Activated B cell treated with CpG ODN at 0.5 μM for 24 hours (primary cell): ENCODE measurements at regions of chr1 and their contacts with region 1.

Region 1: GRCh38 chr1:220217383-220217988 is 54.8 kb downstream of the RAB3GAP2 start:
- DNase-seq: no peak
- ATAC-seq: no peak
- H3K4me3 Mint-ChIP-seq: no peak overlapping the region
- H3K27ac Mint-ChIP-seq: peak overlapping the region; percentile 0
- H3K4me1 Mint-ChIP-seq: peaks cover 49% of the 10 kb centered on the region
- H3K27me3 Mint-ChIP-seq: no peaks in the 10 kb centered on the region
- CTCF ChIP-seq: no peak

Region 2: DNA sequence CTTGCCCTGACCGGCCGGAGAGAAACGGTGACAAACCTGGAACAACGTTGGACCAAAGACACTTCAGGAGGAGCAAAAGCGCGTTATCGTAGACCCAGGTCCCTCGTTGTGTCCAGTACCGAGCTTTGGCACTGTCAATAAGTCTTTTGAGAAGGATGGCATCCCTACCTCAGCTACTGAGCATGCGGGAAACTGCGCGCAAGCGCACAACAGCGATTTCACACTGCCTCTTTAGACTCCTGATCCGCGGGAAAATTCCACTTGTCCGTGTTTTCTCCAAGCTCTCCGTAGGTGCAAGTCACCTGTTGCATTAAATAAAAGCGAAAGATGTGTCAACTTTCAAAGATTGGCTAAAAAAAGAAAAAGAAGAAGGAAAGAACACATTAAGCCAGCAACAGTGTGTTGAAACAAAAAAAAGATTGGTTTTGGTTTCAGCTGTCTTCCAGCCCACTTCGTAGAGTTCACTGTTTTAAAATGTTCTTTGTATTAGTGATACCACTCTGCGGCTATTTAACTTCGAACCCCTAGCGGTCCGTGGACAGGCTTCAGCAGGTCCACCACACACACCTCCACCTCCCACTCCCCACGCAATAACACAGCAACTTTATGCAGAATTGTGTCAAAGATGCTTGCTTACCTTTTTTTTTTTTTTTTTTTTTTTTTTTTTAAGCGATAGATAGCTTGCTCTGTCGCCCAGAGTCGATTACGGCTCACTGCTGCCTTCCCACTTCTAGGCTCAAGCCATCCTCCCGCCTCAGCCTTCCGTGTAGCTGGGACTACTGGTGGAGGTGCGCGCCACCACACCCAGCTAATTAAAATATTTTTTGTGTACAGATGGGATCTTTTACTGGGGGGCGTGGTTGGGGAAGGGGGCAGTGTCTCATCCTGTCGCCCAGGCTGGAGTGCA is 127.6 kb before region 1 on chr1 and contains the start of gene BPNT1:
- CTCF ChIA-PET with region 1: no interaction called
- POLR2A ChIA-PET with region 1: no interaction called
- intact Hi-C with region 1: loop called (anchors 2 kb)
- DNase-seq: peak; percentile 88
- ATAC-seq: peak; percentile 69
- H3K4me3 Mint-ChIP-seq: peak within 1 kb of the TSS; percentile 95
- H3K27ac Mint-ChIP-seq: peak within 1 kb of the TSS; percentile 96
- H3K4me1 Mint-ChIP-seq: peaks cover 34% of the 10 kb centered on the region
- H3K27me3 Mint-ChIP-seq: no peaks in the 10 kb centered on the region
- CTCF ChIP-seq: no peak
- total RNA-seq, gene BPNT1: 22.8 and 23.6 TPM in 2 replicates

Region 3: DNA sequence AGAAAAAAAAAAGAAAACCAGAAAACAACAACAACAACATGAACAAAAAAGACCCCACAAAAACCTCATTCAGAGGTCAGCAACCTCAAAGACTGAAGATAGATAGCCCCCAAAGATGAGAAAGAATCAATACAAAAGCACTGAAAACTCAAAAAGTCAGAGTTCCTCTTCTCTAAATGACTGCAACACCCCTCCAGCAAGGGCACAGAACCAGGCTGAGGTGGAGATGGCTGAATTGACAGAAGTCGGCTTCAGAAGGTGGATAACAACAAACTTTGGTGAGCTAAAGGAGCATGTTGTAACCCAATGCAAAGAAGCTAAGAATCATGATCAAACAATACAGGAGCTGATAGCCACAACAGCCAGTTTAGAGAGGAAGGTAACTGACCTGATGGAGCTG is 37.7 kb after region 1 on chr1:
- CTCF ChIA-PET with region 1: interaction called, 3 read pairs
- POLR2A ChIA-PET with region 1: interaction called, 4 read pairs
- intact Hi-C with region 1: loop called (anchors 2 kb)
- DNase-seq: no peak
- ATAC-seq: peak; percentile 47
- H3K4me3 Mint-ChIP-seq: peak overlapping the region; percentile 51
- H3K27ac Mint-ChIP-seq: peak overlapping the region; percentile 80
- H3K4me1 Mint-ChIP-seq: peaks cover 77% of the 10 kb centered on the region
- H3K27me3 Mint-ChIP-seq: no peaks in the 10 kb centered on the region
- CTCF ChIP-seq: no peak

Region 4: DNA sequence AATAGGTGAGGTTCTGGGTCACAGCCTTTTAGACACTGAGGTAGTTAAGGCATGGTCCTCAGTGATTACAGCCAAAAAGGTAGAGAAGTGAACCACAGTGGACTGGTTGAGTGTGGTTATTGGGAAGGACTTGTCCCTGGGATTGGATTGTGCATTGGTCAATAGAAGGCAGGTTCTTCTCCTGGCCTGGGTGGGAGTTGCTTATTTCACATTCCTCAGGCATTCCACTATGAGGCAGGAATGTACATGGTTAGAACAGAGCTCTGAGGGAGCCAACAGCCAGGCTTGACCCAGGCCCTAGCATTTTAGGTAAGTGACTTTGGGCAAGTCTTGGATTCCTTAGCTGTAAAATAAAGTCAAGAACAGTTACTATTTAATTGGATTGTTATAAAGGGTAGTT is 212.6 kb after region 1 on chr1:
- CTCF ChIA-PET with region 1: no interaction called
- POLR2A ChIA-PET with region 1: no interaction called
- intact Hi-C with region 1: loop called (anchors 5 kb)
- DNase-seq: no peak
- ATAC-seq: no peak
- H3K4me3 Mint-ChIP-seq: no peak overlapping the region
- H3K27ac Mint-ChIP-seq: no peak overlapping the region
- H3K4me1 Mint-ChIP-seq: no peaks in the 10 kb centered on the region
- H3K27me3 Mint-ChIP-seq: peaks cover 5% of the 10 kb centered on the region
- CTCF ChIP-seq: no peak

Region 5: DNA sequence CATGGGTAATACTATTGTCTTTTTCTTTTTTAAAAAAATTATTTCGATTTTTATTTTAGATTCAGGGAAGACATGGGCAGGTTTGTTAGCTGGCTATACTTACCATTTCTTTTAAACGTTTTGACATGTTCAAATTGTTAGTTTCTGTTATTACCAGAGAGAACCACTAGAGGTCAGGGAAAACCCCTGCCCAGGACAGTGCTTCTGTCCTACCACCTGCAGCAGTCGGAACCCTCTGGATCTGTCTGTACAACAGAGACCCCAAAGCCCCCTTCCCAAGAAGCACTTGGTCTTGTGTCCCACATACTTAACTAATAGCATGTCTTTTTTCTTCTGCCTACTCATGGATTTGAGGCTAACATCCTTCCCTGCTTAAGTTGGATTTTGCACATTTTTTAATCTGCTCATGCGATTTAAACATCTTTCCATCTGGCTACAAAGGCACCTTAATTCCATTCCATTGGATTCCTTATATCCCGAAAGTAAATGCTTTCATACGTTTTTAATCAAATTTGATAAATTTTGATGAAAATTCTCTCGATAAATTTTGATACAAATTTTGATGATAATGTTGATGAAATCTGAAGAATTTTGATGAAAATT is 462.7 kb after region 1 on chr1:
- CTCF ChIA-PET with region 1: no interaction called
- POLR2A ChIA-PET with region 1: no interaction called
- intact Hi-C with region 1: loop called (anchors 2 kb)
- DNase-seq: no peak
- ATAC-seq: peak; percentile 83
- H3K4me3 Mint-ChIP-seq: no peak overlapping the region
- H3K27ac Mint-ChIP-seq: no peak overlapping the region
- H3K4me1 Mint-ChIP-seq: peaks cover 3% of the 10 kb centered on the region
- H3K27me3 Mint-ChIP-seq: no peaks in the 10 kb centered on the region
- CTCF ChIP-seq: no peak

Region 6: GRCh38 chr1:220776720-220777326 is 559.3 kb after region 1 on chr1:
- CTCF ChIA-PET with region 1: interaction called, 9 read pairs
- POLR2A ChIA-PET with region 1: no interaction called
- intact Hi-C with region 1: loop called (anchors 1 kb)
- DNase-seq: peak; percentile 76
- ATAC-seq: peak; percentile 94
- H3K4me3 Mint-ChIP-seq: no peak overlapping the region
- H3K27ac Mint-ChIP-seq: no peak overlapping the region
- H3K4me1 Mint-ChIP-seq: peaks cover 24% of the 10 kb centered on the region
- H3K27me3 Mint-ChIP-seq: no peaks in the 10 kb centered on the region
- CTCF ChIP-seq: peak; percentile 32